Gastrocnemius medialis (tissue), 4 donors: ENCODE measurements at regions of chr14 and their contacts with region 1.

Region 1: GRCh38 chr14:67619446-67620216 is at the start of gene ARG2:
- DNase-seq: peak; percentile 96
- ATAC-seq: peak; percentile 59 to 76
- H3K4me3 ChIP-seq: peak within 1 kb of the TSS; percentile 69 to 89 (median 78)
- H3K27ac ChIP-seq: peak within 1 kb of the TSS; percentile 81 to 97 (median 90)
- H3K4me1 ChIP-seq: peaks cover 21 to 40% of the 10 kb centered on the region in 2 donors
- H3K27me3 ChIP-seq: no peaks in the 10 kb centered on the region
- CTCF ChIP-seq: peak in 1 of 5 experiments; percentile 16
- POLR2A ChIP-seq: peak; percentile 94 to 98
- total RNA-seq, gene ARG2: 4.0 to 662 (median 152) TPM

Region 2: DNA sequence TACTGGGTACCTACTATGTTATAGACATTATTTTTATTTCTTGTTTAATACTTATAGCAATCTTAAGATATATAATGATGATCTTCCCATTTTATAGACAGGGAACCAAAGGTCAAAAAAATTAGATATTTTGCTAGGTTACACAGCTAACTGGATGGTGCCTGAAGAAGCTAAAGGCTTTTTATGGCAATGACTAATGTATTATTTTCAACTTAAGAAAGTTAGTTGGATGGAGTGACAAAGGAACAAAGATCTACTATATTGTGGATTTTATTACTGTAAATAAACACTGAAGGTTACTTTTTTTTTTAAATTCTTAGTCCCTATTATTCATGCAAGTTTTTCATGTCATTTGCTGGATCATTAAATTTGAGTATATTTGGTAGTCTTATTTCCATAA is 883.8 kb before region 1 on chr14:
- in situ Hi-C with region 1: no loop called
- intact Hi-C with region 1: no loop called
- DNase-seq: no peak
- ATAC-seq: no peak
- H3K4me3 ChIP-seq: no peak overlapping the region
- H3K27ac ChIP-seq: no peak overlapping the region
- H3K4me1 ChIP-seq: no peaks in the 10 kb centered on the region
- H3K27me3 ChIP-seq: no peaks in the 10 kb centered on the region
- CTCF ChIP-seq: no peak
- POLR2A ChIP-seq: no peak

Region 3: GRCh38 chr14:67387195-67387594 is 232.4 kb before region 1 on chr14:
- in situ Hi-C with region 1: no loop called
- intact Hi-C with region 1: no loop called
- DNase-seq: no peak
- ATAC-seq: no peak
- H3K4me3 ChIP-seq: no peak overlapping the region
- H3K27ac ChIP-seq: no peak overlapping the region
- H3K4me1 ChIP-seq: no peaks in the 10 kb centered on the region
- H3K27me3 ChIP-seq: no peaks in the 10 kb centered on the region
- CTCF ChIP-seq: no peak
- POLR2A ChIP-seq: no peak

Region 4: DNA sequence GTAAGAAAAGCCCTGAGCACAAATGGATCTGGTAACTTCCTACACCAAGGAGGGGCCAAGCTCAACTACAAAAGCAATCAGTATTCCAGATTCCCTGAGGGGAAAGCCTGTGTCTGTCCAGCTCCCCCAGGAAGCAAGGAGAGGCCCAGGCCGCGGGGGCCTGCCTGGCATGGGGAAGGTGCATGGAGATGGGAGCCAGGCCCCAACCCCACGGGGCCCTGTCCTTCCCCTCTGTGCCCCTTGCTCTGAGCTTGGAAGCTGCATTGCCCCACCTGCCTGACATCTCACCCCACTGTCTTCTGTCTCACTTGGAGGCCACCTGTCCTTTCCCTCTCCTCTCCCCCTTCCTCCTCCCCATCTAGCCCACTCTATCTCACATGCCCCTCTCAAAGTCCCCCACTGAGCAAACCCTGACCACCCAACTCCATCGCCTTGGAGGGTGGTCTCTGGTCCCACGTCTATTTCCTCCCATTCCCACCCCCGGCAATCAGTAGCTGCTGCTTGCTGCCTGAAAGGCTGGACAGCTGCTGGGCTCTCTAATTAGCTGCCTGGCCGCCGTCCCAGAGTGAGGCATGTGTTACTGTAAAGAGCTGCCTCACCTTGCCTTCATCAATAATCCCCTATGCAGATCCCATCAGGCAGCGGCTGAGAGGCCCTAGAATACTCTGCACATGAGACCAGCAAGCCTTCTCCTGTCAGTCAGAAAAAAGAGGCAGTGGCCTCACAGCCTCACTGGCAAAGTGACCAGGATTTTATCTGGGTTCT is 127.7 kb before region 1 on chr14:
- in situ Hi-C with region 1: no loop called
- intact Hi-C with region 1: no loop called
- DNase-seq: no peak
- ATAC-seq: no peak
- H3K4me3 ChIP-seq: no peak overlapping the region
- H3K27ac ChIP-seq: no peak overlapping the region
- H3K4me1 ChIP-seq: peaks cover 11% of the 10 kb centered on the region in 2 donors
- H3K27me3 ChIP-seq: no peaks in the 10 kb centered on the region
- CTCF ChIP-seq: no peak
- POLR2A ChIP-seq: no peak

Region 5: DNA sequence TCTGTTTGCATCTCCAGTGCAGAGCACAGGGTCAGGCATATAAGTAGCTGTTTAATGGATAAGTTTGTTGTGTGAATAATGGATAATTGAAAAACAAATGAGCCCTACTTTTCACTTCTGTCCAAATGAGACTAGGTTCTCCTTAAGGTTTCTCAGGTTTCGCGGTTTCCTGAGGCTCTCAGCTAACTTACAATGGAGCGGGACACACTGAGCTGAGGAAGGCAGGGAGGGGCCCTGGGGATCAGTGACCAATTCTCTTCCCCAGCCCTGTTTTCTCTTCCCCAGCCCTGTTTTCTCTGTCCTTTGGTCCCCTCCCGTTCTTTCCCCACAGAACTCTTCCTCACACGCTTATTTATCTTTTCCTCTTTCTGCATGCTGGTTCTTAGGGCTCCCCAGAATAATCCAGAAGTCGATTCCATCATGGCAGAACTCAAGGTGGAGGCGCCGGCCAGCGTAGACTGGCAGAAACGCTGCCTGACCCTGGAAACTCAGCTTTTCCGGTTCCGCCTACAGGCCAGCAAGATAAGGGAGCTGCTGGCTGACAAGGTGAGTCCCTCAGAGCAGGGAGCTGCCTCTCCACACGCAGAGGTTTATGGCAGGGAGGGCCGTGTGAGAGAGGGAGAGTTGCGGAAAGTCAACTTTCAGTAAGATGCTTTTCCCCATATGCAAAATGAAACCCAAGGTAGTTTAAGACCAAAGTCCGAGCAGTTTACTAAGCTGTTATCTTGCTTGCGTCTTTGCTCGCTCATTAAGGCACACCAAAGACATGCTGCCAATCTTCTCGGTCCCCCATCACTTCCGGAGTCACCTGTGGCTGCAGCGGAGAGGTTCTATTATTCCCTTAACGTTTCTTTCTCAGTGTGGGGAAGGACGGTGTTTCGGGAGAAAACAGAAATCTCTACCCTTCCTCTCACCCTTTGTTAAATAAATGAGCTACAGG is 77.9 kb before region 1 on chr14:
- in situ Hi-C with region 1: no loop called
- intact Hi-C with region 1: no loop called
- DNase-seq: no peak
- ATAC-seq: no peak
- H3K4me3 ChIP-seq: no peak overlapping the region
- H3K27ac ChIP-seq: no peak overlapping the region
- H3K4me1 ChIP-seq: peaks cover 0 to 10% of the 10 kb centered on the region in 2 donors
- H3K27me3 ChIP-seq: no peaks in the 10 kb centered on the region
- CTCF ChIP-seq: no peak
- POLR2A ChIP-seq: no peak

Region 6: GRCh38 chr14:67644428-67644827 is 24.8 kb after region 1 on chr14:
- in situ Hi-C with region 1: no loop called
- intact Hi-C with region 1: loop called (anchors 2 kb)
- DNase-seq: peak; percentile 41 to 57
- ATAC-seq: peak; percentile 91 to 94
- H3K4me3 ChIP-seq: no peak overlapping the region
- H3K27ac ChIP-seq: peak overlapping the region; percentile 78 to 89 (median 83)
- H3K4me1 ChIP-seq: peaks cover 8 to 13% of the 10 kb centered on the region in 2 donors
- H3K27me3 ChIP-seq: no peaks in the 10 kb centered on the region
- CTCF ChIP-seq: no peak
- POLR2A ChIP-seq: no peak

Region 7: DNA sequence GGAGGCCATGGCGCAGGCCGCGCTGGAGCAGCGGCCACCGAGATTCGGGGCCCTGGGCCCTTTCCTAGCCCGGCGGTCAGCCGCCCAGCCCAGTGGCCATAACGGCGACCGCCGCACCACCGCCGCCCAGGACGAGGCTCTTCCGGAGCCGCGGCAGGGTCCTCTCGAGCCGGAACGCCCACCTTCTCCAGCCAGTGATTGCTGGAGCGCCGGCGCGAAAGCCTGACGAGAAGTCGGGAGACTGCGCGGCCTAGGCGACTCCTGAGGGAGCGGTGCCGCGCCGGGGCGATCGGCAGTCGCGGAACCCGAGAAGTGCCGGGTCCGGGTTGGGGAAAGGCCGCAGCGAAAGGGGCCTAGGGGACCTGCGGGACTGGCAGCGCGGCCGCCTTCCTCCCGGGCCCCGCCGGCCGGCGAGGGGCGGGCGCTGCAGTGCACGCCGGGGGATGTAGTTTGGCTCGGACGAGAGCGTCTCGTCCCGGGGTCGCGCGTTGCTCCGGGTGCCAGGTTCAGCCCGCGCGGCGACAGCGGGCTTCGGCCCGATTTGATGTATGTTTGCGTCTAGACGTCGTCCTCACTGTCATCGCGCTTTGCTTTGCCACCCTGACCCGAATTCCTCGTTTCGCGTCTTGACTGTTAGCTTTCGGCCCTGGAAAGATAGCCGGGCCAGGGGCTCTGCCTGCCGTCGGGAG is 55.0 kb after region 1 on chr14 and contains the start of gene VTI1B:
- in situ Hi-C with region 1: loop called (anchors 5 to 10 kb)
- intact Hi-C with region 1: loop called (anchors 2 kb)
- DNase-seq: peak; percentile 56 to 71
- ATAC-seq: peak; percentile 95 to 96
- H3K4me3 ChIP-seq: peak within 1 kb of the TSS; percentile 90 to 99 (median 92)
- H3K27ac ChIP-seq: peak within 1 kb of the TSS; percentile 92 to 99 (median 96)
- H3K4me1 ChIP-seq: peaks cover 34 to 40% of the 10 kb centered on the region in 2 donors
- H3K27me3 ChIP-seq: no peaks in the 10 kb centered on the region
- CTCF ChIP-seq: peak in 1 of 5 experiments; percentile 18
- POLR2A ChIP-seq: peak; percentile 59 to 77
- total RNA-seq, gene VTI1B: 33.7 to 69.1 (median 52.8) TPM

Region 8: DNA sequence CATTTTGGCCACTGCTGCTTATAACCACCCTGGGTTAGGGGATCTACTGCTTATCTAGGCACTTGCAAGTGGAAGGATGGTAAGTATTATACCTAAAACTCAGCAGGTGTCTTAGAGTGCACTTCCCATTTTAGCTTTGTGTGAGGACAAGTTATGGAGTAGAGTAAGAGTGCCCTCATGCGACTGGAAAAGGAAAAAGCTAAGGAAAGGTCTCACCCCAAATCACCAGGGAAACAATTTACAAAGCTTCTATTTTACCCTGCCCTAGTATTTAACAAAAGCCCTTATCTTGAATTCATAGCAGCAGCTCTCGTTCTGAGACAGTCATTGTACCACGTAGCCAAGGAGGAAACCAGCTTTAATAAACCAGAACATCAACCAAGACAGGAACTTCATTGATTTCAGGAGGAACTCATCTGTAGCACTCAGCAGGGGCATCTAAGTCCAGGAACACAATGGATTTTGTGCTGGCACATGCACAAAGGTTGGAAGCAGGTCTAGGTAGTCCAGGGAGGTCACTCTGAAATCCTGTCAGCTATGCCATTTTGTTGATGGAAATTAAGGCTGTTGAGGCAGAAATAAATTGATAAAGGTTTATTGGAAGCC is 85.0 kb after region 1 on chr14:
- in situ Hi-C with region 1: loop called in 2 of 4 experiments (anchors 5 to 10 kb)
- intact Hi-C with region 1: loop called (anchors 1 kb)
- DNase-seq: no peak
- ATAC-seq: peak; percentile 69 to 89
- H3K4me3 ChIP-seq: no peak overlapping the region
- H3K27ac ChIP-seq: no peak overlapping the region
- H3K4me1 ChIP-seq: no peaks in the 10 kb centered on the region
- H3K27me3 ChIP-seq: no peaks in the 10 kb centered on the region
- CTCF ChIP-seq: peak; percentile 61 to 79 (median 68)
- POLR2A ChIP-seq: no peak

Region 9: DNA sequence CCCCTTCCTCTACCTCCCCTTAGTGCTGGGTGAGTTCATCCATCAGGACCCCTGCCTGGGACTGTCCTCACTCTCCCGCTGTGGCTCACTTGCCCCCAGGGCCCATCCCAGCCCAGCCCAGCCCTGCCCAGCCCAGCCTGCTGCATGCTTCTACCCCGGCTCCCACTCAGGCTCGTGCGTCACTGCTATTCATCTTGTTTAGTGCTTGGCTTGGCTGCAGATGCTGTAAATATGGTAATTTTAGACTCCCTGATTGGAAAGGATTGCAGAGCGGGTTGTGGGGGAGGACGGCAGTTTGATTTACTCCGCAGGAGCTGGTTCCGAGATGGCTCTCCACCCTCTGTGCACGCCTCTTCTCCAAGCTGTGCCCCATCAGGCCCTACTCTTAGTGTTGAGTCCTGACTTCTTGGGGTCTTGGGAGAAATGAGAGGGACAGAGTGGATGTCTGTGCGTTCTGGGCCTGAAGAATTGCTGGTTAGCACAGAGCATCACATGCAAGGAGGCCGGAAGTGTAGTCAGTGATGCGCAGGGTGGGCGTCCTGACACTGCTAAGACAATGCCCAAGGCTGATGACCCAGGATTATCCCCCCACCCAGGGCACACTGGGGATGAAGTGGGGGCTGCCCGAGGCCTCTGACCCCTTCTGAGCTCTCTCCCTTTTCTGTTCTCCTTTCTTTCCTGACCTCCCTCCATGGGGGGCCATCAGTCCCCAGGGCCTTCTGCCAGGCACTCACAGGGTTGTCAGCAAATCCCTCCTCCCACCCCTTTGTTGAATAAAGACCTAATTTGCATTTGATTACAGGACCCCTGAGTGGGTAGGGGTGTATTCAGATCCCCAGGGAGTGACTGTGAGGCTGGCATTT is 928.8 kb after region 1 on chr14:
- in situ Hi-C with region 1: no loop called
- intact Hi-C with region 1: loop called (anchors 2 kb)
- DNase-seq: peak; percentile 87 to 93
- ATAC-seq: peak; percentile 36 to 52
- H3K4me3 ChIP-seq: peak overlapping the region in 2 of 4 donors; percentile 8 to 18
- H3K27ac ChIP-seq: peak overlapping the region; percentile 93 to 99 (median 97)
- H3K4me1 ChIP-seq: peaks cover 69 to 97% of the 10 kb centered on the region in 2 donors
- H3K27me3 ChIP-seq: no peaks in the 10 kb centered on the region
- CTCF ChIP-seq: no peak
- POLR2A ChIP-seq: peak; percentile 67 to 76